Heart right ventricle (tissue), 16 donors: ENCODE measurements at regions of chr2 and their contacts with region 1.

Region 1: GRCh38 chr2:171608168-171608567 is 79.1 kb upstream of the DYNC1I2 start:
- DNase-seq: no peak
- ATAC-seq: no peak
- H3K4me3 ChIP-seq: no peak overlapping the region
- H3K27ac ChIP-seq: no peak overlapping the region
- H3K4me1 ChIP-seq: no peaks in the 10 kb centered on the region
- H3K27me3 ChIP-seq: peaks cover 0 to 46% (median 16%) of the 10 kb centered on the region in 7 donors
- CTCF ChIP-seq: no peak

Region 2: GRCh38 chr2:171407030-171407675 is 201.0 kb before region 1 on chr2:
- intact Hi-C with region 1: no loop called
- DNase-seq: no peak
- ATAC-seq: no peak
- H3K4me3 ChIP-seq: no peak overlapping the region
- H3K27ac ChIP-seq: no peak overlapping the region
- H3K4me1 ChIP-seq: peaks cover 0 to 11% (median 5%) of the 10 kb centered on the region in 9 donors
- H3K27me3 ChIP-seq: no peaks in the 10 kb centered on the region
- CTCF ChIP-seq: no peak

Region 3: DNA sequence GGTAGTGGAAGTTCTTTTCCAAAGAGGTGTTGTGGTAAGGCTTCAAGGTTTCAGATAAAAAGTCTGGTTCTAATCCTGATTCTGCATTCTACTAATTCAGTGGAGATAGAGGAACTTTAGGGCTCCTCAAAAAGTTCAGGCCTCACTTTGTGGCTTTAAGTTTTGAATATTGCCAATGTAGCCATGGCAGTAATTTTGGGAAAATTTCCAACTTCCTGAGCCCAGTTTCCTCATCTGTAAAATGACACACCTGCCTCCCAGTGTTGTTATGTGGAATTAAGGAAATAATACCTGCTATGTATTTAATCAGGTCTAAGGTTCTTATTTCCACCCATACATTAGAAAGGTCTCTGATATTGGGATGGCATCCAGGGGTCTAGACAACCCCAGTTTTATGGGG is 671.6 kb after region 1 on chr2:
- intact Hi-C with region 1: loop called in 1 of 10 experiments (anchors 5 kb)
- DNase-seq: no peak
- ATAC-seq: no peak
- H3K4me3 ChIP-seq: no peak overlapping the region
- H3K27ac ChIP-seq: no peak overlapping the region
- H3K4me1 ChIP-seq: peaks cover 0 to 52% (median 7%) of the 10 kb centered on the region in 9 donors
- H3K27me3 ChIP-seq: peaks cover 0 to 7% (median 0%) of the 10 kb centered on the region in 7 donors
- CTCF ChIP-seq: no peak